CD4-positive, alpha-beta T cell (primary cell): ENCODE measurements at regions of chr12 and their contacts with region 1.

Region 1: GRCh38 chr12:68865399-68866164 is 57.6 kb downstream of the MDM2 start:
- DNase-seq: no peak
- ATAC-seq: no peak
- H3K4me3 ChIP-seq: no peak overlapping the region
- H3K4me3 Mint-ChIP-seq: no peak overlapping the region
- H3K27ac ChIP-seq: no peak overlapping the region
- H3K27ac Mint-ChIP-seq: no peak overlapping the region
- H3K4me1 ChIP-seq: no peaks in the 10 kb centered on the region
- H3K4me1 Mint-ChIP-seq: no peaks in the 10 kb centered on the region
- H3K27me3 ChIP-seq: no peaks in the 10 kb centered on the region
- H3K27me3 Mint-ChIP-seq: no peaks in the 10 kb centered on the region
- CTCF ChIP-seq: no peak

Region 2: GRCh38 chr12:68821357-68822188 is 44.0 kb before region 1 on chr12:
- CTCF ChIA-PET with region 1: no interaction called
- POLR2A ChIA-PET with region 1: no interaction called
- intact Hi-C with region 1: no loop called
- DNase-seq: no peak
- ATAC-seq: no peak
- H3K4me3 ChIP-seq: no peak overlapping the region
- H3K4me3 Mint-ChIP-seq: no peak overlapping the region
- H3K27ac ChIP-seq: no peak overlapping the region
- H3K27ac Mint-ChIP-seq: peak overlapping the region; percentile 36
- H3K4me1 ChIP-seq: peaks cover 7% of the 10 kb centered on the region
- H3K4me1 Mint-ChIP-seq: peaks cover 34% of the 10 kb centered on the region
- H3K27me3 ChIP-seq: no peaks in the 10 kb centered on the region
- H3K27me3 Mint-ChIP-seq: no peaks in the 10 kb centered on the region
- CTCF ChIP-seq: no peak

Region 3: GRCh38 chr12:69070319-69071090 is 204.9 kb after region 1 on chr12:
- CTCF ChIA-PET with region 1: no interaction called
- POLR2A ChIA-PET with region 1: no interaction called
- intact Hi-C with region 1: loop called (anchors 2 kb)
- DNase-seq: peak; percentile 23 to 74 (median 44)
- ATAC-seq: peak; percentile 71
- H3K4me3 ChIP-seq: no peak overlapping the region
- H3K4me3 Mint-ChIP-seq: no peak overlapping the region
- H3K27ac ChIP-seq: no peak overlapping the region
- H3K27ac Mint-ChIP-seq: no peak overlapping the region
- H3K4me1 ChIP-seq: no peaks in the 10 kb centered on the region
- H3K4me1 Mint-ChIP-seq: no peaks in the 10 kb centered on the region
- H3K27me3 ChIP-seq: peaks cover 0 to 4% of the 10 kb centered on the region in 2 experiments
- H3K27me3 Mint-ChIP-seq: peaks cover 20% of the 10 kb centered on the region
- CTCF ChIP-seq: peak; percentile 85